Mammary epithelial cell (primary cell): ENCODE measurements at regions of chr6 and their contacts with region 1.

Region 1: GRCh38 chr6:42547407-42548329 is 16.2 kb upstream of the UBR2 start:
- DNase-seq: peak; percentile 56
- H3K4me3 ChIP-seq: peak overlapping the region; percentile 51 to 57 (median 54)
- H3K27ac ChIP-seq: no peak overlapping the region
- H3K4me1 ChIP-seq: peaks cover 6% of the 10 kb centered on the region
- H3K27me3 ChIP-seq: no peaks in the 10 kb centered on the region
- CTCF ChIP-seq: peak; percentile 86 to 99

Region 2: GRCh38 chr6:42166444-42167141 is 381.1 kb before region 1 on chr6:
- CTCF ChIA-PET with region 1: no interaction called
- dilution Hi-C with region 1: no loop called
- in situ Hi-C with region 1: no loop called
- intact Hi-C with region 1: loop called (anchors 1 kb)
- DNase-seq: peak; percentile 78
- H3K4me3 ChIP-seq: no peak overlapping the region
- H3K27ac ChIP-seq: no peak overlapping the region
- H3K4me1 ChIP-seq: peaks cover 8% of the 10 kb centered on the region
- H3K27me3 ChIP-seq: no peaks in the 10 kb centered on the region
- CTCF ChIP-seq: peak; percentile 83 to 96

Region 3: DNA sequence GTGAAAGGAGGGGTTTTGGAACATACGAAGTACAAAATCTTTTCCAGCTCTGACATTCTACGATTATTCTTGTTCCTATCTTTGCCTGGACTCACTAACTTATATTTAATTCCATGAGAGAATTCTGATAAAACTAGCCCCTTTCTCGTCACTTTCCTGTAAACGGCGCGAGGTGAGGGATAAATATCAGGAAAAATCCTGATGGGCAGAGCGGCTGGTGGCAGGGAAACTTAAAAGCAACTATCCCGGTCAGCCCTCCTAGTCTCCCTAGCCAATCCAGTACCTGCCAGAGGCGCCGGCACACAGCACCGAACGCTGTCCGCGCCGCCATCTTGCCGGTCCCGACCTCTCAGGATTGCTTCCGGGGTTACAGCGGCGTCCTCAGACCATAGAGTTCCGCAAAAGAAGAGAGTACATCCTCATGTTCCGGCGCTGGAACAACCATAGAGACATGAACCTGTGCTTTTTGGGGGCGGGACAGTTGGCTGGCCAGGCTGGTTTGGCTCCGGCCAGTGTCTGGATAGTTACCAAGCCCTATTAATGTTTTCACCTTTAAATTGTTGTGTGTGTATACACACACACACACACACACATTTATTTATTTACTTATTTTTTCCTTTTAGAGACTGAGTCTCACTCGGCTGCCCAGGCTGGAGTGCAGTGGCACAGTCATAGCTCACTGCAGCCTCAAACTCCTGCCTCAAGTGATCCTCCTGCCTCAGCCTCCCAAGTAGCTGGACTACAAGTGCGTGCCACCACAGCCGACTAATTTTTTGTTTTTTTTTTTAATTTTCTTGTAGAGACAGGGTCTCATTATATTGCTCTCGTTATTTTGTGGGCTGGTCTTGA is 329.9 kb before region 1 on chr6 and contains the start of gene MRPS10:
- CTCF ChIA-PET with region 1: interaction called, 10 read pairs
- dilution Hi-C with region 1: no loop called
- in situ Hi-C with region 1: no loop called
- intact Hi-C with region 1: loop called (anchors 1 kb)
- DNase-seq: peak; percentile 90
- H3K4me3 ChIP-seq: peak within 1 kb of the TSS; percentile 78 to 100 (median 80)
- H3K27ac ChIP-seq: peak within 1 kb of the TSS; percentile 83
- H3K4me1 ChIP-seq: peaks cover 27% of the 10 kb centered on the region
- H3K27me3 ChIP-seq: no peaks in the 10 kb centered on the region
- CTCF ChIP-seq: no peak
- total RNA-seq, gene MRPS10: 41.2 to 50.9 TPM

Region 4: DNA sequence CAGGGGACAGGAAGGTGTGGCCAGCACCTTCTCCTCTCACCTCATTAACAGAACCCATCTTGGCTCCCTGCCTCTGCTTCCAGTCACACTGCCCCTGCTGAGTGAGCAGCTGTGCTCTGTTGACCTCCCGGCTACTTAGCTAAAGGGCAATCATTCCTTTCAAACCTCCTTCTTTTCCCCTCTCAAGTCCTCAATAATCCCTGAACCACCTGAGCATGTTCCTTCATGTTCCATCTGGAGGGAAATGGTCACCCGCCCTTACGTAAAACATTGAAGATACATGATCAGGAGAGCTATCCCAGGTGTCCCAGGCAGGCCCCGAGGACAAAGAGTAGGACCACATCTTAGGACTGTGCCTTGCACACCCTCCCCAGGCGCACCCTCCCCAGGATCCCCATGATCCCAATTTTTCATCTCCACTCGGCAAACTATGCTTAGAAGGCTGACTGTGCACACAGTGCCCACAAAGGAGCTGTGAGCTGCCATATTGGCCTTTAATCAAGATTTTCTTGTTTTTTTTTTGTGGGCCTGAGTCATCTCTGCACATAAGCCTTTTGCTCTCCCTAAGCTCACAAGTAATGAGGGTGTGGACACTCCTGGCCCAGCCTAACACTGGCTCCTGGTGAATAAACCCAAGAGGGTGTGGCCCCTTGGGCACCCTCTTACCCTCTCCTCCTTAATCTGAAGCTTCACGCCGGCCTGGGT is 308.2 kb before region 1 on chr6:
- CTCF ChIA-PET with region 1: interaction called, 15 read pairs
- dilution Hi-C with region 1: no loop called
- in situ Hi-C with region 1: loop called in 1 of 2 experiments (anchors 25 kb)
- intact Hi-C with region 1: no loop called
- DNase-seq: peak; percentile 81
- H3K4me3 ChIP-seq: no peak overlapping the region
- H3K27ac ChIP-seq: peak overlapping the region; percentile 47
- H3K4me1 ChIP-seq: peaks cover 26% of the 10 kb centered on the region
- H3K27me3 ChIP-seq: no peaks in the 10 kb centered on the region
- CTCF ChIP-seq: no peak

Region 5: GRCh38 chr6:42402184-42402583 is 145.5 kb before region 1 on chr6:
- CTCF ChIA-PET with region 1: no interaction called
- dilution Hi-C with region 1: no loop called
- in situ Hi-C with region 1: no loop called
- intact Hi-C with region 1: loop called (anchors 5 kb)
- DNase-seq: peak; percentile 19
- H3K4me3 ChIP-seq: no peak overlapping the region
- H3K27ac ChIP-seq: no peak overlapping the region
- H3K4me1 ChIP-seq: peaks cover 45% of the 10 kb centered on the region
- H3K27me3 ChIP-seq: no peaks in the 10 kb centered on the region
- CTCF ChIP-seq: no peak